Mucosa of descending colon (tissue), 3 donors: ENCODE measurements at regions of chr3 and their contacts with region 1.

Region 1: GRCh38 chr3:71064288-71064955 is 519.1 kb downstream of the FOXP1 start:
- DNase-seq: peak; percentile 59 to 80 (median 79)
- ATAC-seq: peak; percentile 58
- H3K4me3 ChIP-seq: peak overlapping the region; percentile 46
- H3K4me1 ChIP-seq: peaks cover 29% of the 10 kb centered on the region
- CTCF ChIP-seq: no peak

Region 2: GRCh38 chr3:71006810-71007785 is 57.3 kb before region 1 on chr3:
- intact Hi-C with region 1: loop called in 1 of 2 experiments (anchors 10 kb)
- DNase-seq: no peak
- ATAC-seq: peak; percentile 75
- H3K4me3 ChIP-seq: no peak overlapping the region
- H3K4me1 ChIP-seq: peaks cover 26% of the 10 kb centered on the region
- CTCF ChIP-seq: peak; percentile 6